HCT116 (cell line): ENCODE measurements at regions of chr2 and their contacts with region 1.

Region 1: GRCh38 chr2:88016086-88016959 is at the start of gene RNU2-63P:
- DNase-seq: peak; percentile 94
- ATAC-seq: peak; percentile 84
- H3K4me3 ChIP-seq: peak within 1 kb of the TSS; percentile 64 to 65
- H3K27ac ChIP-seq: peak within 1 kb of the TSS; percentile 74
- H3K4me1 ChIP-seq: peaks cover 0 to 18% of the 10 kb centered on the region in 2 experiments; a peak in 3 of 4 replicates
- H3K27me3 ChIP-seq: no peaks in the 10 kb centered on the region
- CTCF ChIP-seq: no peak
- POLR2A ChIP-seq: peak; percentile 100
- RAD21 ChIP-seq: no peak; the same call in 1 of the 2 replicates
- total RNA-seq, gene RNU2-63P: 7.4 TPM

Region 2: GRCh38 chr2:88003074-88003755 is 13.1 kb before region 1 on chr2:
- CTCF ChIA-PET with region 1: interaction called, 8 read pairs
- POLR2A ChIA-PET with region 1: interaction called, 13 read pairs
- RAD21 ChIA-PET with region 1: no interaction called
- intact Hi-C with region 1: no loop called
- DNase-seq: no peak
- ATAC-seq: no peak
- H3K4me3 ChIP-seq: no peak overlapping the region
- H3K27ac ChIP-seq: no peak overlapping the region
- H3K4me1 ChIP-seq: peaks cover 0 to 5% of the 10 kb centered on the region in 2 experiments; a peak in 2 of 4 replicates
- H3K27me3 ChIP-seq: no peaks in the 10 kb centered on the region
- CTCF ChIP-seq: no peak
- POLR2A ChIP-seq: no peak
- RAD21 ChIP-seq: no peak

Region 3: GRCh38 chr2:88027697-88028389 is 11.5 kb after region 1 on chr2:
- CTCF ChIA-PET with region 1: no interaction called
- POLR2A ChIA-PET with region 1: interaction called, 11 read pairs
- RAD21 ChIA-PET with region 1: no interaction called
- intact Hi-C with region 1: no loop called
- DNase-seq: no peak
- ATAC-seq: no peak
- H3K4me3 ChIP-seq: no peak overlapping the region
- H3K27ac ChIP-seq: no peak overlapping the region
- H3K4me1 ChIP-seq: no peaks in the 10 kb centered on the region
- H3K27me3 ChIP-seq: no peaks in the 10 kb centered on the region
- CTCF ChIP-seq: no peak
- POLR2A ChIP-seq: no peak
- RAD21 ChIP-seq: no peak